Activated naive CD4-positive, alpha-beta T cell treated with anti-CD3 and anti-CD28 coated beads for 36 hours (primary cell): ENCODE measurements at regions of chr12 and their contacts with region 1.

Region 1: GRCh38 chr12:80472902-80473500 is 29.0 kb downstream of the PTPRQ start:
- DNase-seq: peak; percentile 4
- H3K4me3 Mint-ChIP-seq: no peak overlapping the region
- H3K27ac Mint-ChIP-seq: no peak overlapping the region
- H3K4me1 Mint-ChIP-seq: no peaks in the 10 kb centered on the region
- H3K27me3 Mint-ChIP-seq: no peaks in the 10 kb centered on the region

Region 2: GRCh38 chr12:80709811-80710726 is 237.1 kb after region 1 on chr12:
- CTCF ChIA-PET with region 1: no interaction called
- intact Hi-C with region 1: loop called (anchors 1 kb)
- DNase-seq: no peak
- H3K4me3 Mint-ChIP-seq: no peak overlapping the region
- H3K27ac Mint-ChIP-seq: no peak overlapping the region
- H3K4me1 Mint-ChIP-seq: no peaks in the 10 kb centered on the region
- H3K27me3 Mint-ChIP-seq: peaks cover 59% of the 10 kb centered on the region

Region 3: GRCh38 chr12:80763874-80764273 is 290.9 kb after region 1 on chr12:
- CTCF ChIA-PET with region 1: no interaction called
- intact Hi-C with region 1: loop called (anchors 1 kb)
- DNase-seq: peak; percentile 9
- H3K4me3 Mint-ChIP-seq: no peak overlapping the region
- H3K27ac Mint-ChIP-seq: no peak overlapping the region
- H3K4me1 Mint-ChIP-seq: no peaks in the 10 kb centered on the region
- H3K27me3 Mint-ChIP-seq: no peaks in the 10 kb centered on the region

Region 4: GRCh38 chr12:81627336-81628189 is 1154.6 kb after region 1 on chr12:
- CTCF ChIA-PET with region 1: no interaction called
- intact Hi-C with region 1: loop called (anchors 10 kb)
- DNase-seq: no peak
- H3K4me3 Mint-ChIP-seq: no peak overlapping the region
- H3K27ac Mint-ChIP-seq: no peak overlapping the region
- H3K4me1 Mint-ChIP-seq: no peaks in the 10 kb centered on the region
- H3K27me3 Mint-ChIP-seq: peaks cover 2% of the 10 kb centered on the region